ENCODE measurements at regions of chr2 and their contacts with region 1.

Region 1: GRCh38 chr2:11344342-11344955 is at the start of gene ROCK2:
- DNase-seq: peak; percentile 91
- H3K4me3 ChIP-seq: peak within 1 kb of the TSS; percentile 98
- H3K27ac ChIP-seq: peak within 1 kb of the TSS; percentile 100
- H3K4me1 ChIP-seq: peaks cover 66% of the 10 kb centered on the region
- H3K27me3 ChIP-seq: no peaks in the 10 kb centered on the region
- CTCF ChIP-seq: no peak
- total RNA-seq, gene ROCK2: 30.2 TPM

Region 2: DNA sequence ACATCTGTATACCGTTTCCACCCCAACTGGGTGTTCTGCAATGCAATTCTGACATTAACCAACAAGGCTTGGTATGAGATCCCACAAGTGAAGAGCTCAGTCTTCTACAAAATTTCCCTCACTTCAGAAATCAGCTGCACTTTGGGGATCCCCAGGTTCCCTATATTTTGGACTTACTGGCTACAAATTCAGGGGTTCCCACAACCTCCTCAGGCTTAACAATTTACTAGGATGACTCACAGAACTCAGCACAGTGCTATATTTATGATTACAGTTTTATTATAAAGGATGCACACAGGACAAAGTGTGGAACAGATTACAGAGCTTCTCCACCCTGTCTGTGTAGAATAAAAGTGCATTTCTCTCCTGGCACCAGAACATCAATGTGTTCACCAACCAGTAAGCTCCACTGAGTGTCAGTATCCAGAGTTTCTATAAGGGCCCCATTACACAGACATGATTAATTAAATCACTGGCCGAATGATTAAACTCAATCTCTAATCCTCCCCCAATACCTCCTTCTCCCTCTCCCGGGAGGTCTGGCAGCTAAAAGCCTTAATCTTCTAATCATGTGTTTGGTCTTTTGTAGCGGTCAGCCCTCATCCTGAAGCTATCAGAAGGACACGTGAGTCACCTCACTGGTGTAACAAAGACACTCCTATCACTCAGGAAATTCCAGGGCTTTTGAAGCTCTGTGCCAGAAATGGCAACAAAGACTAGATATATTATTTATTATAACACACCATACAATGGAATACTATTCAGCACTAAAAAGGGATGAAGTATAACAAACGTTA is 104.6 kb before region 1 on chr2:
- intact Hi-C with region 1: loop called (anchors 5 kb)
- DNase-seq: no peak
- H3K4me3 ChIP-seq: no peak overlapping the region
- H3K27ac ChIP-seq: peak overlapping the region; percentile 16
- H3K4me1 ChIP-seq: peaks cover 22% of the 10 kb centered on the region
- H3K27me3 ChIP-seq: no peaks in the 10 kb centered on the region
- CTCF ChIP-seq: no peak

Region 3: GRCh38 chr2:11292464-11293255 is 51.8 kb before region 1 on chr2:
- intact Hi-C with region 1: loop called (anchors 10 kb)
- DNase-seq: no peak
- H3K4me3 ChIP-seq: no peak overlapping the region
- H3K27ac ChIP-seq: peak overlapping the region; percentile 61
- H3K4me1 ChIP-seq: peaks cover 73% of the 10 kb centered on the region
- H3K27me3 ChIP-seq: no peaks in the 10 kb centered on the region
- CTCF ChIP-seq: no peak

Region 4: GRCh38 chr2:11411768-11412448 is 67.5 kb after region 1 on chr2:
- intact Hi-C with region 1: loop called (anchors 10 kb)
- DNase-seq: no peak
- H3K4me3 ChIP-seq: peak overlapping the region; percentile 60
- H3K27ac ChIP-seq: no peak overlapping the region
- H3K4me1 ChIP-seq: peaks cover 21% of the 10 kb centered on the region
- H3K27me3 ChIP-seq: no peaks in the 10 kb centered on the region
- CTCF ChIP-seq: peak; percentile 90

Region 5: GRCh38 chr2:11583840-11584524 is 239.5 kb after region 1 on chr2:
- intact Hi-C with region 1: no loop called
- DNase-seq: peak; percentile 57
- H3K4me3 ChIP-seq: no peak overlapping the region
- H3K27ac ChIP-seq: peak overlapping the region; percentile 32
- H3K4me1 ChIP-seq: peaks cover 12% of the 10 kb centered on the region
- H3K27me3 ChIP-seq: no peaks in the 10 kb centered on the region
- CTCF ChIP-seq: peak; percentile 88

Measured in left ventricle myocardium inferior (tissue), 1 donor.